PC-9 (cell line): ENCODE measurements at regions of chr4 and their contacts with region 1.

Region 1: GRCh38 chr4:6343950-6344408 is 74.3 kb downstream of the WFS1 start:
- DNase-seq: peak; percentile 74 to 84
- H3K4me3 ChIP-seq: peak overlapping the region; percentile 15; the same call in 1 of the 2 replicates
- H3K27ac ChIP-seq: peak overlapping the region; percentile 46
- H3K4me1 ChIP-seq: peaks cover 18% of the 10 kb centered on the region
- H3K27me3 ChIP-seq: no peaks in the 10 kb centered on the region
- CTCF ChIP-seq: no peak; the same call in 1 of the 2 replicates

Region 2: GRCh38 chr4:6362896-6363295 is 18.9 kb after region 1 on chr4:
- CTCF ChIA-PET with region 1: no interaction called
- POLR2A ChIA-PET with region 1: no interaction called
- intact Hi-C with region 1: no loop called
- DNase-seq: no peak
- H3K4me3 ChIP-seq: no peak overlapping the region
- H3K27ac ChIP-seq: no peak overlapping the region
- H3K4me1 ChIP-seq: no peaks in the 10 kb centered on the region
- H3K27me3 ChIP-seq: no peaks in the 10 kb centered on the region
- CTCF ChIP-seq: no peak

Region 3: DNA sequence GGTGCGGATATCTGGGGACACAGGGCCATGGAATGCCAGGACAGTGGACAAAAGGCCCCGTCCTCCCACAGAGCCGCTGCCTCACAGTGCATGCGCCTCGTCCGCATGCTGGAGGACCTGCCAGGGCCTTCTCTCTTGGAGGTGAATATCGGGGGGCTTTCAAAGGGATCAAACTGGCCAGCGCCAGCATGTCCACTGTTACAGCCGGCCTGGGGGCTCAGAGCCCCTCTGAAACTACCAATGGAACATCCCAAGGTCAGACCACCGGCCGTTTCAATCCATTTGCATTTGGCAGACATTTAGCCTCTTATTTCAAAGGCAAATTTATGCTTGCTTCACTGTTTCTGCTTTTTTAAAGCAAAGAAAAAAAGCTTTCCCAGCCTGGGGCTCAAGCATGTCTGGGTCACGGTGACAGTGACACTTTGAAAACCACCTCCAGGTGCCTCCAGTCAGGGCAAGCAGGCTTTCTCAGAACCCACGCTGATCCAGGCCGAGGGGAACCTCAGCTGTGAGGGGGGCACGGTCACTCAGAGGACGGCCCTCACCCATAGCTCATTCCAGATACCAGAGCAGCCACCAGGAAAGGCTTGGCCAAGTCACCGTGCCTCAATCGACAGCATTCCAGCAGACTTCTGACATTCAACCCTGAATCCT is 71.2 kb after region 1 on chr4:
- CTCF ChIA-PET with region 1: interaction called, 12 read pairs
- POLR2A ChIA-PET with region 1: no interaction called
- intact Hi-C with region 1: no loop called
- DNase-seq: no peak
- H3K4me3 ChIP-seq: no peak overlapping the region
- H3K27ac ChIP-seq: no peak overlapping the region
- H3K4me1 ChIP-seq: no peaks in the 10 kb centered on the region
- H3K27me3 ChIP-seq: no peaks in the 10 kb centered on the region
- CTCF ChIP-seq: no peak

Region 4: DNA sequence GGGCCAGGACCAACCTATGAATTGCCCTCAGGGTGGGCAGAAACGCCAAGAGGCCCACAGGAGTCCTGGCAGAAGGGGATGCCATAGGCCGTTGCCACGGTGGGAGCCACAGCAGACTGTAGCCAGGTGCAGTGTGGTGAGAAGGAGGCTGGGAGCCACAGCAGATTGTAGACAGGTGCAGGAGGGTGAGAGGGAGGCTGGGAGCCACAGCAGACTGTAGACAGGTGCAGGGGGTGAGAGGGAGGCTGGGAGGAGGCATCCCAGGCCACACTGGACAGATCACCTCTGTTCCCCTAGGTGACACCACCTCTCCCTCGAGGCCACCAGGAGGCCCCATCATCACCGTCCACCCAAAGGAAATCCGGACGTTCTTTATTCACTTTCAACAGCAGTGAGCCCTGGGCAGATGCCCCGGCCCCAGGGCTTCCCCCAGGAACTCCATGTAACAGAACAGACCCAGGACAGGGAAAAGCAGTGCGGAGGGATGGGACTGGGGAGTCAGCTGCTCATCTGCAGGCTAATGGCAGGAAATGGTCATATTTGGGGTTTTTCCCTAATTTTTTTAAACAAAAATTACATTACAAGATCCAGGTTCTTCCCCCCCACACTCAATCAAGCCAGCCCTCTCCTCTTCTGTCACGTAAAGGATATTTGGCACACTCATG is 277.0 kb after region 1 on chr4:
- CTCF ChIA-PET with region 1: no interaction called
- POLR2A ChIA-PET with region 1: no interaction called
- intact Hi-C with region 1: no loop called
- DNase-seq: no peak
- H3K4me3 ChIP-seq: no peak overlapping the region
- H3K27ac ChIP-seq: no peak overlapping the region
- H3K4me1 ChIP-seq: peaks cover 7% of the 10 kb centered on the region; the same call in 1 of the 2 replicates
- H3K27me3 ChIP-seq: no peaks in the 10 kb centered on the region
- CTCF ChIP-seq: no peak